ENCODE measurements at regions of chr19 and their contacts with region 1.

Region 1: DNA sequence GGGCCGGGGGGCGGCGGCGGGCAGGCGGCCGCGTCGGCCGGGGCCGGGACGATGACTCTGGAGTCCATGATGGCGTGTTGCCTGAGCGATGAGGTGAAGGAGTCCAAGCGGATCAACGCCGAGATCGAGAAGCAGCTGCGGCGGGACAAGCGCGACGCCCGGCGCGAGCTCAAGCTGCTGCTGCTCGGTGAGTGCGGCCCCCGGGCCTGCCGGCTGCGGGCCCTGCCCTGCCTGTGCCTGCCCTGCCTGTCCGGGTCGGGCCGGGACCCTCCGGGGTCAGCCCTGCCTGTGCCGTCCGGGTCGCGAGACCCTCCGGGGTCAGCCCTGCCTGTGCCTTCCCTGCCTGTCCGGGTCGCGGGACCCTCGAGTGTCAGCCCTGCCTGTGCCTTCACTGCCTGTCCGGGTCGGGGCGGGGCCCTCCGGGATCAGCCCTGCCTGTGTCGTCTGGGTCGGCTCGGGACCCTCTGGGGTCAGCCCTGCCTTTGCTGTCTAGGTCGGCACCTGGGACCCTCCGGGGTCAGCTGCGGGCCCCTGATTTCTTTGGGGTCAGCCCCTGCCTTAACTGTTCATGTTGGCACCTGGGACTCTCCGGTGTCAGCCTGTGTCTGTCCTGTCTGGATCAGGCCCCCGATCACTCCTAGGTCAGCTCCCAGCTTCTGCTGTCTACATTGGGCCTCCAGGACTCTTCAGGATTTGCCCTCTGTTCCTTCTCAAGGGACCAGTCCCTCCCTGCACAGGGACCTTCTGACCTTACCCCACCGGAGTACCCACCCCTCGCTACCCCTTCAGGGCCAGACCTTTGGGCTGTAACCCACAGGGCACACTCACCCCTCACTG is 657 bp downstream of the GNA11 start:
- DNase-seq: peak; percentile 59
- H3K4me3 Mint-ChIP-seq: peak overlapping the region; percentile 77
- H3K27ac Mint-ChIP-seq: no peak overlapping the region
- H3K4me1 Mint-ChIP-seq: peaks cover 34% of the 10 kb centered on the region
- H3K27me3 Mint-ChIP-seq: no peaks in the 10 kb centered on the region

Region 2: DNA sequence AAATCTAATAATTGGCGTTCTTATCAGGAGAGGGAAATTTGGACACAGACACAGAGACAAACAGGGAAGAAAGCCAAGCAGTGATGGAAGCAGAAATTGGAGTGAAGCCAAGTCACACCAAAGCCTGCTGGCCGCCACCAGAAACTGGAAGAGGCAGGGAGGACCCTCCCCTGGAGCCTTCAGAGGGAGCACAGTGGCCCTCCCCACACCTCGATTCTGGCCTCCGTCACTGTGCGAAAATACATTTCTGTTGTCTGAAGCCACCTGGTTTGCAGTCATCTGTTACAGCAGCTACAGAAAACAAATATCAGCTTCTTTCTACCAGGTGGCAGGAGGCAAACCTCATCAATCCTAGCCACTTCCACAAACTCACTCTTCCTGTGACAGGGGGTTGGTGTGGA is 125.7 kb before region 1 on chr19:
- CTCF ChIA-PET with region 1: no interaction called
- intact Hi-C with region 1: no loop called
- DNase-seq: no peak
- H3K4me3 Mint-ChIP-seq: no peak overlapping the region
- H3K27ac Mint-ChIP-seq: no peak overlapping the region
- H3K4me1 Mint-ChIP-seq: no peaks in the 10 kb centered on the region
- H3K27me3 Mint-ChIP-seq: no peaks in the 10 kb centered on the region

Region 3: DNA sequence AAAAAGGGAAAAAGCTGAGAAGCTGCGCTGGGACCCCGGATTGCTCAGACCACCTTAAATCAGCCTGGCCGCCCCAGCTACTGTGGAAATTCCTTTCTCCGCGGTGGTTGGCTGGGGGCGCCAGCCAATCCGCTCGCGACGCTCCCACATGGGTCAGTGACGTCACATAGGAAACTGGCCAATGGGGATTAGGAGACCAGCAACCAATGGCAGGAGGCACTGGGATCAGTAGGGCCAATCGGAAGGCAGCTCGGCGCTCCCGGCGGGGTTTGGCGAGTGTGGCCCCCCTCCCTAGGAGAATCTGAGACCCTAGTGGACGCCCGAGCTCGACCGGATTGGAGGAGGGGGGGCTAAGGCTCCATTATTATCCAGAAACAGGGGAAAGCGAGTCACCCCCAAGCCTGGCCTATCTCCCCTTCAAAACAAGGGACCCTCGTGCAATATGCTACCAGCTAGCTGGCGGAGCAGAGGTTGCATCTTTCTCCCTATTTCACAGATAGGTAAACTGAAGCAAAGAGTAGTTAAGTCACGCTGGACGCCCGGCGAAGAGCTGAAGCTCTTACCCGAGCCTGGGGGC is 59.2 kb before region 1 on chr19:
- CTCF ChIA-PET with region 1: interaction called, 5 read pairs
- intact Hi-C with region 1: loop called (anchors 2 kb)
- DNase-seq: peak; percentile 98
- H3K4me3 Mint-ChIP-seq: peak overlapping the region; percentile 87
- H3K27ac Mint-ChIP-seq: peak overlapping the region; percentile 94
- H3K4me1 Mint-ChIP-seq: peaks cover 19% of the 10 kb centered on the region
- H3K27me3 Mint-ChIP-seq: no peaks in the 10 kb centered on the region

Region 4: GRCh38 chr19:3210347-3211017 is 115.7 kb after region 1 on chr19:
- CTCF ChIA-PET with region 1: no interaction called
- intact Hi-C with region 1: no loop called
- DNase-seq: peak; percentile 83
- H3K4me3 Mint-ChIP-seq: no peak overlapping the region
- H3K27ac Mint-ChIP-seq: no peak overlapping the region
- H3K4me1 Mint-ChIP-seq: no peaks in the 10 kb centered on the region
- H3K27me3 Mint-ChIP-seq: no peaks in the 10 kb centered on the region

Measured in activated naive CD4-positive, alpha-beta T cell treated with anti-CD3 and anti-CD28 coated beads for 36 hours (primary cell).